ENCODE measurements at regions of chr9 and their contacts with region 1.

Region 1: DNA sequence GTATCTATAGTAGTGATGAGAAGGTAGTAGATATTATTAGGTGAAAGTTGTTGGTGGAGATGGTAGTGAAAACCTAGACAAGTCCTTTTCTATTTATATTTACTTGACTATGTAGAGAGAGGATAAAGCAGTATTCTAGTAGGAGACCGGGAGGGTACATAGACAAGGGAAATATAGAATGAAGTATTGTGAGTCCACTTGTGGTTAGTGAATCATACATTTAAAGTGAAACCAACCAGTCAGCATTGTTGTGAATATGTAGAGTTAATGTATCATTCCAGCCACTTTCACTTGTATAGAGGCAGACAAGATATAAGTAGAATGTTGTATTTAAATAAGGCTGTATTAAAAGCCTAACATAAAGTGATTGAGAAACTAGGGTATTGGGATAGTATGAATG is 1711.3 kb upstream of the ACO1 start:
- DNase-seq: no peak
- ATAC-seq: no peak
- H3K4me3 ChIP-seq: no peak overlapping the region
- H3K27ac ChIP-seq: no peak overlapping the region
- H3K4me1 ChIP-seq: no peaks in the 10 kb centered on the region
- H3K27me3 ChIP-seq: no peaks in the 10 kb centered on the region
- CTCF ChIP-seq: no peak
- POLR2A ChIP-seq: no peak
- RAD21 ChIP-seq: no peak

Region 2: DNA sequence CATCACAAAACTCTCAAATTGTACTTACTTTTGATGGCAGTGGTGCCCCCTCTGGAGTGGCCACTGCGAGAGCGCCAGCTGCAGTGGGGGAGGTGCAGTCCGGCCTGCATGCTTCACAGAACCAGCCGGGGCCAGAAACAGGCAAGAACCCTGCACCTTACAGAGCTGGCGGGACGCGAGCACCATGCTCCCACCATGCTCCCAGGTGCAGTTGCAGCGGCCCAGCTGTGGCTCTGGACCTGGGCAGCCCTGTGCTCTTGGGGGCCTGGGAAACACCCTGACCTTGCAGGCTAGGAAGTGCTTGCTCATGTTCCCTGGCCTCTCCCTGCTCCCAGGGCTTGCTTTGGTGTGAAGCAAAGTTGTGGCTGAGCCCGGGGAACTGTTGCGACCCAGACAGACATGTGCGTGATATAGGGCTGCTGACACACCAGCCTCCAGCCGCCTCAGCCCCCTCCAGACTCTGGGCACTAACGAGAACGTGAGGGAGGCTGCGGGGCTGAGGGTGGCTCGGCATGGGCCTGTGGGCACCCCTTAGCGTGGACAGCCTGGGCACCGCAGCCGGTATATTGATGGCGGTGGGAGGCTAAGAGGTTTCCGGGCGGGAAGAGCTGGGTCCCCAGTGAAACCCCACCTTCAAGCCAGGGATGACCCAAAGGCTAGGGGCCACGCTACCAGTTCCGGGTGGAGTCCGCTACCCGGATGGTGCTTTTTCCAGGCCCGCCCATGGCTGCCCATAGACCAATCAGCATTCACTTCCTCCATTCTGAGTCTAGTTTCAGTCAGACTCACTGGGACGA is 98.6 kb before region 1 on chr9:
- CTCF ChIA-PET with region 1: no interaction called
- POLR2A ChIA-PET with region 1: no interaction called
- dilution Hi-C with region 1: no loop called
- in situ Hi-C with region 1: no loop called
- intact Hi-C with region 1: no loop called
- DNase-seq: no peak
- ATAC-seq: no peak
- H3K4me3 ChIP-seq: no peak overlapping the region
- H3K27ac ChIP-seq: no peak overlapping the region
- H3K4me1 ChIP-seq: no peaks in the 10 kb centered on the region
- H3K27me3 ChIP-seq: no peaks in the 10 kb centered on the region
- CTCF ChIP-seq: no peak
- POLR2A ChIP-seq: no peak
- RAD21 ChIP-seq: no peak

Region 3: GRCh38 chr9:30609713-30610112 is 63.4 kb before region 1 on chr9:
- CTCF ChIA-PET with region 1: interaction called, 3 read pairs
- POLR2A ChIA-PET with region 1: no interaction called
- dilution Hi-C with region 1: no loop called
- in situ Hi-C with region 1: no loop called
- intact Hi-C with region 1: loop called (anchors 10 kb)
- DNase-seq: no peak
- ATAC-seq: no peak
- H3K4me3 ChIP-seq: no peak overlapping the region
- H3K27ac ChIP-seq: no peak overlapping the region
- H3K4me1 ChIP-seq: no peaks in the 10 kb centered on the region
- H3K27me3 ChIP-seq: no peaks in the 10 kb centered on the region
- CTCF ChIP-seq: no peak
- POLR2A ChIP-seq: no peak
- RAD21 ChIP-seq: no peak

Region 4: GRCh38 chr9:30774326-30774725 is 101.2 kb after region 1 on chr9:
- CTCF ChIA-PET with region 1: no interaction called
- POLR2A ChIA-PET with region 1: no interaction called
- dilution Hi-C with region 1: no loop called
- in situ Hi-C with region 1: loop called (anchors 25 kb)
- intact Hi-C with region 1: no loop called
- DNase-seq: no peak
- ATAC-seq: no peak
- H3K4me3 ChIP-seq: no peak overlapping the region
- H3K27ac ChIP-seq: no peak overlapping the region
- H3K4me1 ChIP-seq: no peaks in the 10 kb centered on the region
- H3K27me3 ChIP-seq: no peaks in the 10 kb centered on the region
- CTCF ChIP-seq: no peak
- POLR2A ChIP-seq: no peak
- RAD21 ChIP-seq: no peak

Measured in IMR-90 (cell line).